ENCODE measurements at regions of chr12 and their contacts with region 1.

Region 1: GRCh38 chr12:96399919-96400797 is at the start of gene CDK17:
- DNase-seq: peak; percentile 85 to 87
- ATAC-seq: peak; percentile 82 to 94 (median 88)
- H3K4me3 ChIP-seq: peak within 1 kb of the TSS; percentile 70 to 97 (median 90)
- H3K27ac ChIP-seq: peak within 1 kb of the TSS; percentile 92 to 100 (median 99)
- H3K4me1 ChIP-seq: peaks cover 0 to 48% (median 37%) of the 10 kb centered on the region in 9 donors
- H3K27me3 ChIP-seq: no peaks in the 10 kb centered on the region
- CTCF ChIP-seq: peak in 8 of 9 donors; percentile 37 to 77 (median 54)
- total RNA-seq, gene CDK17: 14.5 to 32.4 (median 21.7) TPM

Region 2: DNA sequence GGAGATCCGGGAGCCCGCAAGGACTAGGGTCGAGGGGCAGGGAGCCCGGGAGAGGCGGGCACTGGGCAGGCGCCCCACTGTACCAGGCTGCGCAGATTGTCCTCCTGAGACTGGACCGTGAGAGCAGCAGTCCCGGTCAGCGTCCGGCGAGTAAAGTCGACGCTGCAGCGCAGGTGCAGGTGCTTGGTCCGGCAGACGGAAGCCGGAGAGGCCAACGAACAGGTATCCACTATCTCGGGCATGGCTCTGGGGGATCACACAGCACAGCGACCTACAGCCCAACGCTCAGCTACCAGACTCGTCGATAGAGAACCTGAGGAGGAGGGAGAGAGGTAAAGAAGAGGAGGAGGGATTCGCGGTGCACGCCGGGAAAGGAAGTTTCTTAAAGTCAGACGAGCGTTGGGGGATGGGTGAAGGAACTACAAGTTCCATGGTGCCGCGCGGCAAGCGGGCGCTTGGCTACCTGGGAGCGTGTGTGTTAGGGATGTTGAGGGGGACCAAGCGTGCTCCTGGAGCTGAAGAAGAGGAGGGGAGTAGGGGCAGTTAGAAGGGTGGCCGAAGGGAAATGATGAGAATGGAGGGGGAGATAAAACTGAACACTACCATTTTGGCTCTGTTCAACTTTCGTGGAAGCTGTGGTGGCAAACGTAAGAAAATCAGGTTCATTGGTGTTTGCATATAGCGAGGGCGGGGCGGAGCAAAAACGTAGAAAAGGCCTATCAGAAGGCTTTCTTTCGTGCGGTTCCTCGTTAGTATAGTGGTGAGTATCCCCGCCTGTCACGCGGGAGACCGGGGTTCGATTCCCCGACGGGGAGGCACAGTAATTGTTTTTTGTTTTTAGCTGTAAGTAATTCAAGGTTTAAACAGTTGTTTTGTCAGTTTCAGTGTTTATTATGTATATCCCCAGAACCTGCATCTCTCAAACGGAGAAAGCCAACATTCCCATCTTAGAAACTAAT is 364.6 kb before region 1 on chr12 and contains the start of gene LTA4H:
- intact Hi-C with region 1: loop called in 1 of 10 experiments (anchors 10 kb)
- DNase-seq: peak; percentile 93 to 97
- ATAC-seq: peak; percentile 98 to 99 (median 99)
- H3K4me3 ChIP-seq: peak within 1 kb of the TSS; percentile 60 to 97 (median 88)
- H3K27ac ChIP-seq: peak within 1 kb of the TSS; percentile 14 to 89 (median 80)
- H3K4me1 ChIP-seq: peaks cover 0 to 50% (median 20%) of the 10 kb centered on the region in 9 donors
- H3K27me3 ChIP-seq: no peaks in the 10 kb centered on the region
- CTCF ChIP-seq: no peak
- total RNA-seq, gene LTA4H: 31.8 to 50.6 (median 39.4) TPM

Region 3: GRCh38 chr12:96219698-96220206 is 180.4 kb before region 1 on chr12:
- intact Hi-C with region 1: loop called in 1 of 10 experiments (anchors 5 kb)
- DNase-seq: no peak
- ATAC-seq: peak in 4 of 8 donors; percentile 10 to 57 (median 23)
- H3K4me3 ChIP-seq: no peak overlapping the region
- H3K27ac ChIP-seq: peak overlapping the region in 4 of 10 donors; percentile 8 to 60 (median 30)
- H3K4me1 ChIP-seq: peaks cover 0 to 95% (median 68%) of the 10 kb centered on the region in 9 donors
- H3K27me3 ChIP-seq: no peaks in the 10 kb centered on the region
- CTCF ChIP-seq: no peak

Region 4: DNA sequence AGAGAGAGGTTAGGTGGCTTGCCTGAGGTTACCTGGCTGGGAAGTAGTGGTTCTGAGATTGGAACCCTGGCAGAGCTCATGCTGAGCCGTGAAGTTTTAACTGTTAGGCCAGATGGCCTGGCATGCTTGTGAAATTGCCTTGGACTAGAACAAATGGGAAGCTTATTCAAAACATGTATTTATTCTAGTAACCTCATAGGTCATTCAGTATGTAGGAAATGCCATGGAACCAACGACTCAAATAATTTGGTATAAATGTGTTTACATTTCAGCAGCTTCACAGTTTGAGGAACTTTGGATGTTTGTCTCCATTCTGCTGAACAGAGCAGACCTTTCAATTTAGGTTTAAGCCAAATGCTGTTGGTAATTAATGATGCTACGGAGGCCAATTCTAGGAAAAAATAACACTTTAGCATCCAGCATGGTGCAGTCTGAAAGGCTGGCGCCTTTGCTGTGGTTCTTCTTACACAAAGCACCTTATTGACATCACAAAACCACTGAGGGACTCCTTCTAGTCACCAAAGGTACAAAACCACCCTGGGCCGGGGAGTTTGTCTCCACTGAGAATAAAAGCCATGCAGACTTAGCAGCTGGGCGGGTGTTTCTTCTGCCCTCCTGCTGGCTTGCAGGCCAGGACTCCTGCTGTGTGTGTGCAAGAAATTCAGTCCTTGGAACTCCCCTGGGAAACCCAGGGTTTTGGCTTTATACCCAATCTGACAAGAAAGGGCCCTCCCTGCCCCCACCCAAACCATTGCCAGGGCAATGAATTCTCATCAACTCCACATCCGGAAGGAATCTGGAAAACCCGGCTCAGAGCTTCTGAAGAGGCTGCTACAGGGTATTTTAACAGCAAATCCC is 141.8 kb before region 1 on chr12:
- intact Hi-C with region 1: loop called in 2 of 10 experiments (anchors 2 to 5 kb)
- DNase-seq: peak; percentile 70 to 89
- ATAC-seq: peak; percentile 49 to 61 (median 53)
- H3K4me3 ChIP-seq: no peak overlapping the region
- H3K27ac ChIP-seq: peak overlapping the region in 9 of 10 donors; percentile 29 to 82 (median 61)
- H3K4me1 ChIP-seq: peaks cover 7 to 88% (median 70%) of the 10 kb centered on the region in 9 donors
- H3K27me3 ChIP-seq: no peaks in the 10 kb centered on the region
- CTCF ChIP-seq: no peak

Region 5: GRCh38 chr12:96308881-96309280 is 91.3 kb before region 1 on chr12:
- intact Hi-C with region 1: loop called in 4 of 10 experiments (anchors 5 to 10 kb)
- DNase-seq: no peak
- ATAC-seq: no peak
- H3K4me3 ChIP-seq: no peak overlapping the region
- H3K27ac ChIP-seq: no peak overlapping the region
- H3K4me1 ChIP-seq: peaks cover 0 to 5% (median 2%) of the 10 kb centered on the region in 9 donors
- H3K27me3 ChIP-seq: no peaks in the 10 kb centered on the region
- CTCF ChIP-seq: no peak

Region 6: DNA sequence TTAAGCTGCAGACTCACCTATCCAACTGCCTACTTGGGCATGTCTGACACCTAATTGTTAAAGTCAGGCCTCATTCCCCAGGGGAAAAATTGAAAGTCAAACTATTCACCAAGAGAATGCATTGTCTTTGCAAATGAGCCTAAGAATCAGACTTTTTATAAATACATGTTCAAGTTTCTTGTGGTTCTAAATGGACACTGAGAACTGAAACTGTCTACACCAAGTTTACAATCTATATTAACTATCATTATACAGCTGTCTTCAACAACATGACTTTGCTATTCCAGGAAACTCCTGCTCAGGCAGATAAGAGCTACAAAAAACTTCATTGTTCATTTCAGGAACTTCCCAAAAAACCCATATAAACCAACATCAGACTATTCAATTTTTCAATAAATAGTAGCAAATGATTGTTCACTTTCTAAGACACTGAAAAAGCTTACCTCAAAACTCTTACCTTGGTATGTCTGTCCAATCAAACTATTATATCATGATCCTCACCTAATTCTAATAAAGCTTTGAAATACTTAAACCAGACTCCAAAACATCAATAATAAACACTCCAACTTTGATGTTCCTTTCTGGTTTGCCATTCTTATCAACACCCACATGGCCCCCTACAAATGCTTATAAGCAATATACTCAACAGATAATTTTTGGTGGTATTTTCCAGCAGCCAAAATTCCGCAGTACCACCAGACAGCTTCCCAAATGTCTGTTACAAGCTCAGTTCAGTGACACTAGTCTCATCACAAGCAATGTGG is 24.1 kb before region 1 on chr12:
- intact Hi-C with region 1: loop called in 1 of 10 experiments (anchors 2 kb)
- DNase-seq: no peak
- ATAC-seq: peak; percentile 25 to 77 (median 62)
- H3K4me3 ChIP-seq: no peak overlapping the region
- H3K27ac ChIP-seq: peak overlapping the region in 7 of 10 donors; percentile 41 to 74 (median 56)
- H3K4me1 ChIP-seq: peaks cover 5 to 82% (median 60%) of the 10 kb centered on the region in 9 donors
- H3K27me3 ChIP-seq: no peaks in the 10 kb centered on the region
- CTCF ChIP-seq: no peak

Region 7: GRCh38 chr12:96489103-96490056 is 89.2 kb after region 1 on chr12 and contains the start of gene CFAP54:
- intact Hi-C with region 1: loop called in 5 of 10 experiments (anchors 5 to 10 kb)
- DNase-seq: peak; percentile 93
- ATAC-seq: peak; percentile 96 to 99 (median 99)
- H3K4me3 ChIP-seq: peak within 1 kb of the TSS; percentile 39 to 74 (median 65)
- H3K27ac ChIP-seq: peak within 1 kb of the TSS in 7 of 10 donors; percentile 5 to 62 (median 47)
- H3K4me1 ChIP-seq: peaks cover 0 to 23% (median 4%) of the 10 kb centered on the region in 9 donors
- H3K27me3 ChIP-seq: no peaks in the 10 kb centered on the region
- CTCF ChIP-seq: peak; percentile 67 to 96 (median 87)
- total RNA-seq, gene CFAP54: 0.08 to 0.35 (median 0.27) TPM in 9 of 10 donors, not detected in the other

Region 8: GRCh38 chr12:96743606-96744005 is 343.4 kb after region 1 on chr12:
- intact Hi-C with region 1: no loop called
- DNase-seq: no peak
- ATAC-seq: no peak
- H3K4me3 ChIP-seq: no peak overlapping the region
- H3K27ac ChIP-seq: no peak overlapping the region
- H3K4me1 ChIP-seq: no peaks in the 10 kb centered on the region
- H3K27me3 ChIP-seq: no peaks in the 10 kb centered on the region
- CTCF ChIP-seq: no peak

Measured in heart right ventricle (tissue), 16 donors.